Heart left ventricle (tissue), 16 donors: ENCODE measurements at regions of chr5 and their contacts with region 1.

Region 1: DNA sequence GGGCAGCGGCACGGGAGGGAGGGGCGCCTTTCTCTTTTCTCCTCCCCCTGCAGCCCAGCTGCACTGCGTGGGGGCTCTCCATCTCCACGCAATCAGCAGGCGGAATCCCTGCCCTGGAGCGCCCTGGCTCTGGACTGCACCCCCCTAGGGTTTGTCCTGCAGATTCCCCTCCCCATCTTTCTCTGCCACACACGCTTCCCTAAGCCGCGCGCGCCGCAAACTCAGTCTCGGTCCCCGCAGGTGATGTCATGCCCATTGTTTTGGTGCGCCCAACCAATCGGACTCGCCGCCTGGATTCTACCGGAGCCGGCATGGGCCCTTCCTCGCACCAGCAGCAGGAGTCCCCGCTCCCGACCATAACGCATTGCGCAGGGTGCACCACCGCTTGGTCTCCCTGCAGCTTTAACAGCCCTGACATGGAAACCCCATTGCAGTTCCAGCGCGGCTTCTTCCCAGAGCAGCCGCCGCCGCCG is at the start of gene KCNN2:
- DNase-seq: peak; percentile 87 to 91 (median 90)
- ATAC-seq: peak; percentile 96 to 99 (median 98)
- H3K4me3 ChIP-seq: peak within 1 kb of the TSS; percentile 51 to 95 (median 72)
- H3K27ac ChIP-seq: peak within 1 kb of the TSS in 10 of 12 donors; percentile 45 to 80 (median 70)
- H3K4me1 ChIP-seq: peaks cover 0 to 38% (median 15%) of the 10 kb centered on the region in 12 donors
- H3K27me3 ChIP-seq: peaks cover 0 to 60% (median 16%) of the 10 kb centered on the region in 9 donors
- CTCF ChIP-seq: no peak
- POLR2A ChIP-seq: peak in 1 of 2 donors; percentile 35
- total RNA-seq, gene KCNN2: 4.7 to 11.6 (median 6.7) TPM

Region 2: DNA sequence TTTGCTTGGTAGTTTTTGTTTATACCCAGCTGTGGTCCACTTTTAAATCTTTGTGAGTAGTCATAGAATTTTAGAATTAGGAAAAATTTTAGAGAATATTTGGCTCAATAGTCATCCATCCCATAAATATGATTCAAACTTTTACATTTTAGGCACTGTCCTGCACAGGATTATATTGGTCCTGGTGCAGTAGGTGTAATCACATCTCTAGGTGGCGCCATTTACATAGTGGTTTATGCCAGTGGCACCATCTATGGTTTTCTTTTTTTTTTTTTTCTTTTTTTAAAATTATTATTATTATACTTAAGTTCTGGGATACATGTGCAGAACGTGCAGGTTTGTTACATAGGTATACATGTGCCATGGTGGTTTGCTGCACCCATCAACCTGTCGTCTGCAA is 260.6 kb before region 1 on chr5:
- intact Hi-C with region 1: loop called in 1 of 10 experiments (anchors 5 kb)
- DNase-seq: peak in 1 of 5 donors; percentile 18
- ATAC-seq: peak in 2 of 4 donors; percentile 62 to 63
- H3K4me3 ChIP-seq: no peak overlapping the region
- H3K27ac ChIP-seq: no peak overlapping the region
- H3K4me1 ChIP-seq: no peaks in the 10 kb centered on the region
- H3K27me3 ChIP-seq: no peaks in the 10 kb centered on the region
- CTCF ChIP-seq: peak; percentile 44 to 76 (median 66)
- POLR2A ChIP-seq: no peak